ENCODE measurements at regions of chr10 and their contacts with region 1.

Region 1: DNA sequence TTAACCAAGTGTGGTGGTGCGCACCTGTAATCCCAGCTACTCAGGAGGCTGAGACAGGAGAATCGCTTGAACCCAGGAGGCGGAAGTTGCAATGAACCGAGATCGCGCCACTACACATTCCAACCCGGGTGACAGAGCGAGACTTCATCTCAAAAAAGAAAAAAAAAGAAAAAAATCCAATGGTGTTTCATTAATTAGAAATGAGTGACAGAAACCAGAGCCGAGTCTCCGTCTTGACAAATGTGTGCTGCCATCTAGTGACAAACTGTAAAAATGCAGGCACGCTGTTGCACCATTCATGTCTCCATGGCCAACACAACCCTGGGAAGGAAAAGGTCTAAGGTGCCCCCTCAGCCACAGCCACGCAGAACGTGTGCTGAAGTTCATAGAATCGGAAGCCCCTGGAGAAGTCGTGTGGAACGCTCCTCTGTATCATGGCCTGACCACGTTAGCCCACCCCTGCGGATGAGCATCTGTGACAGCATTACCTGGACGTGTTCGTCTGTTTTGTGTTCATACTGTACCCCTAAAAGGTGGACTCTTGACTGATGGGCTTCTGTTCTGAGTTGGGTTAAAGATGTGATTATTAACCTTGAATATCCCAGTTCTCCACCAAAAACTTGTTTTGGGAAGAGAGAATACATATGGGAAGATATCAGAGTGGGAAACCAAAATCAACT is 94.9 kb downstream of the LYZL2 start:
- DNase-seq: peak; percentile 68
- H3K4me3 ChIP-seq: no peak overlapping the region; a peak in 1 of 4 replicates
- H3K27ac ChIP-seq: no peak overlapping the region
- H3K4me1 ChIP-seq: no peaks in the 10 kb centered on the region; a peak in 1 of 4 replicates
- H3K27me3 ChIP-seq: no peaks in the 10 kb centered on the region
- CTCF ChIP-seq: peak; percentile 89
- EP300 ChIP-seq: no peak
- RAD21 ChIP-seq: peak; percentile 89

Region 2: DNA sequence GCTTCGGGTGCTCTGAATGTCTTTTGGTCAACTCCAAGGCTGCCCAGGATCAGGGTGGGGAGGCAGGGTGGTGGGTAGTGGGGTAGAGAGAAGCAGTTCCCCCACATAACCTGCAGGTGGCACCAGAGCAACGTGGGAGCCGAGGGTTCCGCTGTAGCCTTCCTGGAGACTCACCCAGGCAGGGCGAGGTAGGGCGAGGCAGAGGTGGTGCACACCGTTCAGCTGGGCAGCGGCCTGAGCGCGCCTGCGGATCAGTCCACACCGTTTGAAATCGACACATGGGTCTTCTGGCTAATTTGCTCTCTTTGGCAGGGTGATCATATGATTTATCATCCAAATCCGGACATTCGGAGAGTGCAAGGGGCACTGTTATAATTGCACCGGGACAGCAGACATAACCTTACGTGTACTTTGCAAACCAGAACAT is 142.0 kb before region 1 on chr10:
- CTCF ChIA-PET with region 1: interaction called, 21 read pairs
- POLR2A ChIA-PET with region 1: no interaction called
- DNase-seq: peak; percentile 89
- H3K4me3 ChIP-seq: peak overlapping the region; percentile 12 to 16; a peak in 2 of 4 replicates
- H3K27ac ChIP-seq: no peak overlapping the region
- H3K4me1 ChIP-seq: peaks cover 0 to 9% of the 10 kb centered on the region in 2 experiments; a peak in 1 of 4 replicates
- H3K27me3 ChIP-seq: peaks cover 7% of the 10 kb centered on the region; the same call in 1 of the 2 replicates
- CTCF ChIP-seq: peak; percentile 86
- EP300 ChIP-seq: no peak
- RAD21 ChIP-seq: peak; percentile 91

Region 3: GRCh38 chr10:30413996-30414576 is 120.5 kb before region 1 on chr10:
- CTCF ChIA-PET with region 1: interaction called, 13 read pairs
- POLR2A ChIA-PET with region 1: no interaction called
- DNase-seq: peak; percentile 64
- H3K4me3 ChIP-seq: no peak overlapping the region
- H3K27ac ChIP-seq: no peak overlapping the region
- H3K4me1 ChIP-seq: no peaks in the 10 kb centered on the region
- H3K27me3 ChIP-seq: no peaks in the 10 kb centered on the region
- CTCF ChIP-seq: peak; percentile 84
- EP300 ChIP-seq: no peak
- RAD21 ChIP-seq: peak; percentile 78

Region 4: DNA sequence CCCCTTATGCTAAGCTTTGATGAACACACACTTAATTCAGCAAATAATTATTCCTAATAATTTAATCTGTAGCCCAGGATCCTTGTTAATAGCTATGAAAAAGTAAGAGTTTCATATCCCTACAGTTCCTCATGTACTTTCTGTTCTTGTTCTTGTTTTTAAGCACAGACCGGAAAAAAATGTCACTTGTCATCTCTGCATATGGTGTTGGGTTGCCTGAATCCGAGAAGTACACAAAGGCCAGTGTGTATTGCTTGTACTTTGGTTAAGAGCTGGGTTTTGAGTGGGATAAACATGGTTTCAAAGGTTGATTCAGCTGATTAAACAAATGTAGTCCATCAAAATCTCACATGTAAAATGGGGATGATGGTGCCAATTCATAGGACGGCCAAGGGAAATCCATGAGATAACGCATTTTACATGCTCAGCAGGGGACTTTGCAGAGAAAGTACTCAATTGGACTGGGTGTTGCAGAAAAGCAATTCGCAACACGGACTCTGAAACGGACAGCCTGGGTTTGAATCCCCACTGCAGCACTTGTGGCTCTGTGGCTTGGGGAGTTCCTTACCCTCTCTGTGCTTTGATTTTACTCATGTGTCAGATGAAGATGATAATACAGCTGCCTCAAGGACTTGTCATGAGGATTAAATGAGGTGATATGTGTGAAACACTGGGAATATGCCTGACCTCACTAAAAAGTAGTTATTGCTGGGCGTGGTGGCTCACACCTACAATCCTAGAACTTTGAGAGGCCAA is 28.9 kb before region 1 on chr10:
- CTCF ChIA-PET with region 1: interaction called, 10 read pairs
- POLR2A ChIA-PET with region 1: no interaction called
- DNase-seq: no peak
- H3K4me3 ChIP-seq: no peak overlapping the region
- H3K27ac ChIP-seq: no peak overlapping the region
- H3K4me1 ChIP-seq: peaks cover 0 to 4% of the 10 kb centered on the region in 2 experiments; a peak in 1 of 4 replicates
- H3K27me3 ChIP-seq: peaks cover 7% of the 10 kb centered on the region; the same call in 1 of the 2 replicates
- CTCF ChIP-seq: no peak
- EP300 ChIP-seq: no peak
- RAD21 ChIP-seq: no peak

Measured in SK-N-SH (cell line).